Endothelial cell of umbilical vein (primary cell): ENCODE measurements at regions of chr2 and their contacts with region 1.

Region 1: GRCh38 chr2:180938451-180938850 is 42.0 kb upstream of the UBE2E3 start:
- DNase-seq: no peak
- H3K4me3 ChIP-seq: no peak overlapping the region
- H3K27ac ChIP-seq: no peak overlapping the region
- H3K4me1 ChIP-seq: no peaks in the 10 kb centered on the region
- H3K27me3 ChIP-seq: peaks cover 0 to 3% of the 10 kb centered on the region in 2 experiments
- CTCF ChIP-seq: no peak
- POLR2A ChIP-seq: no peak

Region 2: DNA sequence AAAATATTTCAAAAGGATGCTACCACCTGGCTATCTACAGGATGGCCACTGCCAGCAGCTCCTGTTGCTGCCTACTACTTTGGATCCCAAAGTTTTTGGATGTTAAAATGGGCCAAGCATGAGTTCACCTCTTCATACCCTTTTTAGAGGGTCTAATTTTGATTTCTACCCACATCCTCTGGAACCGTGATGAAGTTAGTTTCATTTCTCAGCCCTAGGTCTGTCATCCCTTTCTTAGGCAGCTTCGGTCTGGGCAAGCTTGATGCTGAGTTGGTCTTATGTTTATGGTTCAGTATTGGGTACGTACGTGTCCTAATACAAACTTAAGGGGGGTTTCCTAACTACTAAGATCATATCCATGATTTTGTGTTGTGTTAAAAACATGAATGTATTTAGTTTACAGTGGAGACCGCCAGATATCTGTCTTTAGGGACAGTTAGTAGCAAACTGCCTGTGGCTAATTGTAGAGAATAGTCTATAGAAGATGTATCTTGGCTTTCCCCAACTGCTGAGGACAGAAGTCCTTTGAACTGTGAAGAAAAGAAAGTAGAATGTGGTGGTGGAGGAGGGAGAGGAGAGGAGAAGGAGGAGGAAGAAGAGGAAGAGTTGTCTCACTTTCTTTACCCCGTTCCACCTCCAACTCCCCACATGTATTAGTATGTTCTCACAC is 226.9 kb after region 1 on chr2:
- CTCF ChIA-PET with region 1: no interaction called
- POLR2A ChIA-PET with region 1: no interaction called
- dilution Hi-C with region 1: no loop called
- intact Hi-C with region 1: loop called (anchors 10 kb)
- DNase-seq: no peak
- H3K4me3 ChIP-seq: no peak overlapping the region
- H3K27ac ChIP-seq: no peak overlapping the region
- H3K4me1 ChIP-seq: no peaks in the 10 kb centered on the region
- H3K27me3 ChIP-seq: no peaks in the 10 kb centered on the region
- CTCF ChIP-seq: no peak
- POLR2A ChIP-seq: no peak

Region 3: DNA sequence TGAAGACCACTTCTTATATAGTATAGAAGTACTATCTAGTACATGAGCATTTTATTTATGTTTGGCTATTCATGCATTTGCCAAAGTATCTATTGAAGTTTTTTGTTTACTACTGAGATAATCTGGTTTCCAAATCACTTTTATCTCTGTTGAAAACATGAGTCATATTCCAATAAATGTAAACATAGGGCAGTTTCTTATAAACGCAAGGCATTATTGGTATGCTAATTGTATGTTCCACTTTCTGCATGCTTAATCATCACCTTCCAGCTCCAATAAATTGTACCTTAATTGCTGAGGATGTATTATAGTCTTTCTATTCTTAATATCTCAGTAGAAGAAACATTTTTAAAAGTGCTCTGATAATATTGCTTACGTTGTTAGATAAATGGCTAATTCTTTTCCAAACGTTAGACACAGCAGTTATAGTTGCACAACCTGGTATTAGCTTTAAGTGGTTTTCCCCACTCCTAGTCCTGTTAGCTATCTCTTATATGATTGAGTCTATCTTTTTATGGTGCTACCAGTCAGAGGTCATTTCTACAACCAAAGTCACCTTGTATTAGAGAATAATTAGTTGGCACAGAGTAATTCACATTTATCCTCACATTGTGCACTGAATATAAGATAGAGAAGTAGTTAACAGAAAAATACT is 535.9 kb after region 1 on chr2:
- CTCF ChIA-PET with region 1: no interaction called
- POLR2A ChIA-PET with region 1: no interaction called
- dilution Hi-C with region 1: no loop called
- intact Hi-C with region 1: no loop called
- DNase-seq: no peak
- H3K4me3 ChIP-seq: no peak overlapping the region
- H3K27ac ChIP-seq: no peak overlapping the region
- H3K4me1 ChIP-seq: no peaks in the 10 kb centered on the region
- H3K27me3 ChIP-seq: no peaks in the 10 kb centered on the region
- CTCF ChIP-seq: no peak
- POLR2A ChIP-seq: no peak